ENCODE measurements at regions of chr6 and their contacts with region 1.

Region 1: GRCh38 chr6:11232193-11232769 is at the start of gene NEDD9:
- DNase-seq: peak; percentile 95
- H3K4me3 ChIP-seq: peak within 1 kb of the TSS; percentile 70
- H3K27ac ChIP-seq: peak within 1 kb of the TSS; percentile 87
- H3K4me1 ChIP-seq: peaks cover 38% of the 10 kb centered on the region
- H3K27me3 ChIP-seq: no peaks in the 10 kb centered on the region
- CTCF ChIP-seq: no peak
- total RNA-seq, gene NEDD9: 28.1 TPM

Region 2: GRCh38 chr6:10962673-10963072 is 269.6 kb before region 1 on chr6:
- intact Hi-C with region 1: no loop called
- DNase-seq: no peak
- H3K4me3 ChIP-seq: no peak overlapping the region
- H3K27ac ChIP-seq: no peak overlapping the region
- H3K4me1 ChIP-seq: no peaks in the 10 kb centered on the region
- H3K27me3 ChIP-seq: no peaks in the 10 kb centered on the region
- CTCF ChIP-seq: no peak

Region 3: DNA sequence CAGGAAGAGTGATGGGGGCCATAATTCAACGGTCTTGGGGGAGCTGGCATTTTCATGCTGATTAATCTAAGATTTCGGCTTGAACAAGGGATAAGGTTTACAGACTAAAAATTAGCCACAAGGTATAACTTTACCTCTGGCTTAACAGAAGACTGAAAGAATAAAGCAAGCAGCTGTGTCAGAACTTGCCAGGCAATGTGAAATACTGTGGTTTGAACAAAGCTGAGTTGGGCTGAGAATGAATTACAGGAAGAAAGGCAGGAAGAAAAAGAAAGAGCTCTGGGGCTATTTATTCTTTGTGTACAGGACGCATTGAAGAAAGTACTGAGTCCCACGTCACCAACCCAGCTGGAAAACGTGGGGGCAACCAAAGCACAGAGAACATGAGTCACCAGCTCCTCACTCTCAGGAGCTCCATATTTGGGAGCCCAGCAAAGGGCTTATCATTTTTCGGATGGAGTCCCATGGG is 121.7 kb after region 1 on chr6:
- intact Hi-C with region 1: loop called (anchors 10 kb)
- DNase-seq: peak; percentile 25
- H3K4me3 ChIP-seq: no peak overlapping the region
- H3K27ac ChIP-seq: peak overlapping the region; percentile 93
- H3K4me1 ChIP-seq: peaks cover 52% of the 10 kb centered on the region
- H3K27me3 ChIP-seq: no peaks in the 10 kb centered on the region
- CTCF ChIP-seq: no peak